Activated CD8-positive, alpha-beta T cell treated with anti-CD3 and anti-CD28 coated beads, Interleukin-2, amount 10 ng/mL, durations not matched to agents 7 days and 5 days (primary cell): ENCODE measurements at regions of chr10 and their contacts with region 1.

Region 1: GRCh38 chr10:7525314-7526016 is 114.6 kb upstream of the SFMBT2 start:
- DNase-seq: peak; percentile 85
- ATAC-seq: peak; percentile 93
- H3K4me3 Mint-ChIP-seq: no peak overlapping the region
- H3K27ac Mint-ChIP-seq: peak overlapping the region; percentile 0
- H3K4me1 Mint-ChIP-seq: peaks cover 47% of the 10 kb centered on the region
- H3K27me3 Mint-ChIP-seq: peaks cover 14% of the 10 kb centered on the region

Region 2: GRCh38 chr10:7410862-7411670 is 114.4 kb before region 1 on chr10 and contains the start of gene SFMBT2:
- CTCF ChIA-PET with region 1: interaction called, 12 read pairs
- POLR2A ChIA-PET with region 1: no interaction called
- DNase-seq: peak; percentile 76
- ATAC-seq: peak; percentile 55
- H3K4me3 Mint-ChIP-seq: peak within 1 kb of the TSS; percentile 98
- H3K27ac Mint-ChIP-seq: peak within 1 kb of the TSS; percentile 98
- H3K4me1 Mint-ChIP-seq: peaks cover 48% of the 10 kb centered on the region
- H3K27me3 Mint-ChIP-seq: peaks cover 16% of the 10 kb centered on the region
- total RNA-seq, gene SFMBT2: 63.1 to 63.2 TPM

Region 3: DNA sequence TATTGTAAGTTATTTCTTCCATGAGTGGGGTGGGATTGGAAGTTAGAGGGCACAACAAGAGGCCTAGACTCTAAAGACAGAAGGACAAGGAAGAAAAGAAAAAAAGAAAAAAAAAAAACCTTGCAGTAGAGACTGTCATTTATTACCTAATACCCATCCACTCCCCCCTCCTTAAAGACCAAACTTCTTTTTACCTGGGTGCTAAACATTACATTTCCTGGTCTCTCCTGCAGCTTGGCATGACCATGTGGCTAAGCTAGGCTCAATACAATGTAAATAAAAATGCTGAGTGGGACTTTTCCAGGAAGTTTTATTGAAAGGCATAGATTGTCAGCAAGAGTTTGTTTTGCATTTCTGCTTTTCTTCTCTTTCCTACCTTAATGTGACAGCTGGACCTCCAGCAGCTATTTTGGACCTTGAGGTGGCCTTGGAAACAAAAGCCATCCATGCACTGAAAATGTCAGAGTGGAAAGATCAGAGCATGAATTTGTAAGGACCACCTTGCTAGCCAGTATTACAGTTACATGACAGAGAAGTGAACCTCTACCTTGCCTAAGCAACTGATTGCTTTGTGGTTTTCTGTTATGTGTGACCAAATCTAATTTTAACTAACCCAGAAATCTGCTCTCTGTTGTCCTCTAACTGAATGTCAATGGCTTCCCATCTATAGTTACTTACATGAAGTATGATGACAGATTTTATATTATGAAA is 33.4 kb before region 1 on chr10:
- CTCF ChIA-PET with region 1: interaction called, 21 read pairs
- POLR2A ChIA-PET with region 1: no interaction called
- DNase-seq: no peak
- ATAC-seq: peak; percentile 63
- H3K4me3 Mint-ChIP-seq: peak overlapping the region; percentile 33
- H3K27ac Mint-ChIP-seq: peak overlapping the region; percentile 84
- H3K4me1 Mint-ChIP-seq: peaks cover 86% of the 10 kb centered on the region
- H3K27me3 Mint-ChIP-seq: no peaks in the 10 kb centered on the region

Region 4: GRCh38 chr10:7538970-7539667 is 13.7 kb after region 1 on chr10:
- CTCF ChIA-PET with region 1: interaction called, 21 read pairs
- POLR2A ChIA-PET with region 1: no interaction called
- DNase-seq: no peak
- ATAC-seq: no peak
- H3K4me3 Mint-ChIP-seq: no peak overlapping the region
- H3K27ac Mint-ChIP-seq: peak overlapping the region; percentile 70
- H3K4me1 Mint-ChIP-seq: peaks cover 12% of the 10 kb centered on the region
- H3K27me3 Mint-ChIP-seq: no peaks in the 10 kb centered on the region

Region 5: DNA sequence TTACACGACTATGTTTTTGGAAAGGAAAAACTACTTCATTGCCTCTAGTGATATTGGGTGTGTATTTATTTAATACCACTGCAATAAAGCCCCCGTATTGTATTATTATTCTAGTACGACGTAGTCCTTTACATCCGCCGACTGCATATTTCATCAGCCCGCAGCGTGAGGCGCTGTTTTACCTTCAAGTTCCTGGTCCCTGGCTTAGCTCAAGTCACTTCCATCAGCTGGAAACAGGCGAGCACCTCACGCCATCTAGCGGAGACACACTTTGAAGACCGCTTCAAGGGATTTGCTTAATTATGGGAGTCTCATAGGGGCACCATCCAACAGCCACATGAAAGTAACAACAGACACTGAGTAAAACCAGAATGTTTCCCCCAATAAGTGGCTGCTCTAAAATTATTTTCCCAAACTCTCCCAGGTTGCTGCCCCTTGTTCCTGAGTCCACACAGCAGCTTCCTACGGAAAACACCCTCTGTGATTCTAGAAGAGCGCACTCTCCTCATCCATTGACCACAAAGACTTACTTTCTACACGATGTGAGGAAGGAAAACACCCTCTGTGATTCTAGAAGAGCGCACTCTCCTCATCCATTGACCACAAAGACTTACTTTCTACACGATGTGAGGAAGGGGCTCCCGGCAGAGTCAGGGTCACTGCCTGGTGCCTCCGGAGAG is 161.9 kb after region 1 on chr10:
- CTCF ChIA-PET with region 1: interaction called, 132 read pairs
- POLR2A ChIA-PET with region 1: no interaction called
- DNase-seq: peak; percentile 91
- ATAC-seq: peak; percentile 98
- H3K4me3 Mint-ChIP-seq: no peak overlapping the region
- H3K27ac Mint-ChIP-seq: no peak overlapping the region
- H3K4me1 Mint-ChIP-seq: peaks cover 5% of the 10 kb centered on the region
- H3K27me3 Mint-ChIP-seq: peaks cover 23% of the 10 kb centered on the region